ENCODE measurements at regions of chr14 and their contacts with region 1.

Region 1: GRCh38 chr14:77151918-77152588 is 10.5 kb upstream of the ZDHHC22 start:
- DNase-seq: no peak
- H3K4me3 ChIP-seq: no peak overlapping the region
- H3K27ac ChIP-seq: no peak overlapping the region
- H3K4me1 ChIP-seq: no peaks in the 10 kb centered on the region
- H3K27me3 ChIP-seq: no peaks in the 10 kb centered on the region
- CTCF ChIP-seq: peak; percentile 22

Region 2: DNA sequence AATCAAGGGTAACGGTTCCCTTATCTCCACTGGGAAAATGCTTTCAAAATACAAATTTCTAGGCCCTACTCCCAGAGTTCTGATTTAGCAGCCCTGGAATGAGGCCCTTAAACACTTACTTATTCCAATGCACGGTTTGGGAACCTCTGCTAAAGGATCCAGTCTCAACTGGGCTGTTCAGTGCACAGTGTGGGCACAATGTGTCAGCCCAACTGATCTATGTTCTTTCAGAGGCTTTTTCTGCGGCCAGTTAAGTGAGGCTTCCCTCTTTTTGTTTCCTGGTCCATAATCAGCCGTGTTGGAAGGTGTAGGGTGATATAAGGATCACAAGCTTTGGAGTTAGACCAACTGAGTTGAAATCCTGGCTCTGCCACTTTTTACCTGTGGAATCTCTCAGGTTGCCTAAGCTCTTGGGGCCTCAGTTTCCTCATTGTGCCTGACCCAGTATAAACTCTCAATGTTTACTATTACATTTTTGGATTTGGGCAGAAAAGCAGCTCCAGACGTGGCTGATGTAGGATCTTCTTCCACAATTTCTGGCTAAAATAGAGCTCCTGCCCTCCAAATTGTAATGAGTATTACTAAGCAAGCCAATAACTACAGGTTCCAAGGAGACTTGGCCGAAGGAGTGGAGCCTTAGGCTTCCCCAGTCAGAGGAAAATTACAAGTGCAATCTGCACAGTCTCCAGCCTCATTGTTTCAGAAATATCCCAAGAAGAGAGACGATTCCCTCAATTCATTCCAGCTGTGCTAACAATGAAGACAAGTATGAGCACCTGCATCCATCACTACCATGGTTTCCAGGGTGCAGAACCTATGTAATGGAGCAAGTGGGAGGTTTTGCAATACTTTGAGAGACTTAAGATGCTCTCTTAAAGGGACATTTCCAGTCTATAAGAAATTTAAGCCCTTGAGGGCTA is 337.1 kb before region 1 on chr14:
- intact Hi-C with region 1: no loop called
- DNase-seq: no peak
- H3K4me3 ChIP-seq: no peak overlapping the region
- H3K27ac ChIP-seq: no peak overlapping the region
- H3K4me1 ChIP-seq: no peaks in the 10 kb centered on the region
- H3K27me3 ChIP-seq: no peaks in the 10 kb centered on the region
- CTCF ChIP-seq: no peak

Region 3: DNA sequence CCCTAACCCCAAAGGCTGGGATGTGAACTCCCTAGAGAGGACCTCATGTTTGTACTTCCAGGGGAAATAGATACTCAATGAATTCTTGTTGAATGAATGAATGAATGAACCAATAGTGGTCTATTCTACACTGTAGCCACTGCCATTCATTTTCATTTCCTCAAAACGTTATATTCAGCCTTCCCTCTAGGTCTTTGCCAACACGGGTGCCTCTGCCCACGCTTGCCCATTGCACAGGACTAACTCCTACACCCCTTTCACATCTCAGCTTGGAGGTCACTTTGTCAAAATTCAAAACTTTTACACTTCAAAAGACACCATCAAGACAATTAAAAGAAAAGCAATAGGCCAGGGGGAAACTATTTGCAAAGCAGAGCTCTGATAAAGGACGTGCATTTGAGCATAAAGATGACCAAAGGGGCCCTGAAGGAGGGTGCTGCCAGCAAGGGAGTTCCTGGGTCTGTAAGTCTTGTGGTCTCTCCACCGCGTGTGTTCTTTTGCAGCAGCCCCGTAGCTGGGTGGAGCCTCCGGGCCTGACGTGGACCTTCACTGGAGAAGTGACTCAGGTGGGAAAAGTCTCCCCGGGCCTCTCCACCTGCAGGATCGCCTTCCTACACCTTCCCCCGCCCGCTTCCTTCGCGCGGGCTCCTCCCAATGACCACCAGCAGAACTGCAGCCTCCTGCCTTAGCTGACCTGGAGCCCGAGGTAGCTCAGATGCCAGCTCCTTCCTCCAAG is 61.1 kb after region 1 on chr14:
- intact Hi-C with region 1: loop called (anchors 5 kb)
- DNase-seq: peak; percentile 49
- H3K4me3 ChIP-seq: no peak overlapping the region
- H3K27ac ChIP-seq: no peak overlapping the region
- H3K4me1 ChIP-seq: no peaks in the 10 kb centered on the region
- H3K27me3 ChIP-seq: no peaks in the 10 kb centered on the region
- CTCF ChIP-seq: peak; percentile 61

Region 4: DNA sequence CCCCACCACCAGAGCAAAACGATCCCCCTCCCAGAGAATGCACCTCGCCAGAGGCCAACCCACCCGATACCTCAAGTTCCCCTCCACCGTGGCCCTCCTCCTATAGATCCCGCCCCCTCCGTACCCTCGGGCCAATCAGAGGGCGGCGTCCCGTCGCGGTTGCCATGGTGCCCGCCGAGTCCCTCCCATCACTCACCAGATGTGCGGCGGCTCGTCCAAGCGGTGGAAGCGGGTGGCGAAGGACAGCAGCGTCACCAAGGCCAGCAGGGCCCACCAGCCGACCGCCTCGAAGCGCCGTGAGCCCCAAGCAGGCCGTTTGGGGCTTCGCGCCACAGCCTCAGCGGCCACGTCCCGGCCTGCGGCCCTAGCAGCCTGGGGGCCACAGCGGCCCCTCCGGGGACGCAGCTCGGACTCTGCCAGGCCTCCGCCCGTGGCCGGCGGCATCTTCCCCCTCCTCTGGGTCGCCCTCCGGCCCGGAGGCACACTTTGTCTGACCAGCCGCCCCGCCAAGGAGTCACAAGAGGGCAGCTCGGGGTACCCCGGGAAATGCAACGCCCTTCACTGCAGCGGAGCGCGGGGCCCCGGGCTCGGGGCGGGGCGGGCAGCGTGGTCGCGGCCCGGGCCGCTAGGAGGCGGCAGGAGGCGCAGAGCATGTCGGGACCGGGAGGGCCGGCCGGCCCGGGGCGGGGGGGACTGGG is 168.3 kb after region 1 on chr14 and contains the start of gene POMT2:
- intact Hi-C with region 1: loop called (anchors 2 kb)
- DNase-seq: peak; percentile 96
- H3K4me3 ChIP-seq: peak within 1 kb of the TSS; percentile 100
- H3K27ac ChIP-seq: peak within 1 kb of the TSS; percentile 98
- H3K4me1 ChIP-seq: peaks cover 6% of the 10 kb centered on the region
- H3K27me3 ChIP-seq: no peaks in the 10 kb centered on the region
- CTCF ChIP-seq: peak; percentile 23
- total RNA-seq, gene POMT2: 13.0 to 37.7 TPM